ENCODE measurements at regions of chr9 and their contacts with region 1.

Region 1: DNA sequence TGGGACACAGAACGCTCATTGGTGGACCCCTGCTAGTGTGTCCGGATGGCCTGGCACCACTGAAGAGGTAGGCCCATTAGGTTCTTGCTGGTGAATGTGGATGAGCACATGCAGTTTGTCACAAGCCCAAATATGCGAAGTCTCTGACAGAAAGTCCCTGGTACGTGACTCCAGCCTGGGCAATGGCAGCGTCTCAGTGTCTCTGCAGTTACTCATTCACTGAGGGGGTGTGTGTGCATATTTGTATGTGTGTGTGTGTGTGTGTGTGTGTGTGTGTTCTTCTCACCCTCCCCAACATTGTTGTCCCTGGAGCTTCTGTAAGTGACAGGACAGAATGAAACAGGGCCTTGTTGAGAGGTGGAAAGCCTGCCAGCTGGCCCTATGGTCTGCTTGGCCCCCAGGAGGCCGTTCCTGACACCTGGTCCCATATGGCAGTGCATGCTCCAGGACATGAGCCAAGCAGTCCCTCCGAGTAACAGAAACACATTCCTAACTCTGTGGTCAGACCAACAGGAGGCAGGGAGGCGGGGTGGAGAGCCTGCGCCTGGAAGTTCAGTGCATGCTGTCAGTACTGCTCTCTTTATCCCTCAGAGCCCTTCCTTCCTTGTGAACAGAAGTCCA is 169.9 kb downstream of the SLC28A3 start:
- DNase-seq: peak; percentile 93
- ATAC-seq: peak; percentile 97

Region 2: DNA sequence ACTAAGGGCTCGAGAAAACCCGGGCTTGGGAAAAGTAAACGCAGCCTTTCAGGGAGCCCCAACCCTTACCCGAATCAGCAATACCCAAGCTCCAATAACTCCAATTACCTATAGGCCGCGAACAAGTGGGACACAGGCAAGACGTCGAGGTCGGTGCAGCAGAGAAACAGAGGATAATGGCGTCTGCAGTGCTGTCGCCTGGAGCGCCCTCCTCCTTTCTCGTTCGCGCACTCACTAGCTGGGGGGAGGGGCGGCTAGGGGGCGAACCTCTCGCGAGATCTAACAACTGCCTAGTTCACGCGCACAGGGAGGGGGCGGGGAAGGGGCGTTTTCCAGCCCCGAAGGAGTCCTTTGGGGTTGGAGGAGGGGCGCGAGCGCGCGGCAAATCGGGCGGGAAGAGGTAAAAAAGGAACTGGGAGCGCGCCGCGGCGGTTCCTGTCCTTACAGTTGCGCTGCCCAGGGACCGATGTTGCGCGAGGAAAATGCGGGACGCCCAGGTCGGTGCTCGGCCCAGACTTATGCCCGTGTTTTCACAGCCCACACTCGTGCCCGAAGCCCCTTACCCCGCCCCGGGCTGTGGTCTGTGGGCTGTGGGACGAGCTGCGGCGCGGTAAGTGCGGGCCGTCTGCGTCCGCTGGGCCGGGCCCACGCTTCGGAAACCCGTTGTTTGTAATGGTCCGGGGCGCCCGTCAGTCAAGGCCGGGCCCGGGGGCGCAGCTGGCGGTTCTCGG is 190.1 kb before region 1 on chr9 and contains the start of gene RMI1:
- intact Hi-C with region 1: loop called (anchors 5 kb)
- DNase-seq: peak; percentile 100
- ATAC-seq: peak; percentile 94
- total RNA-seq, gene RMI1: 7.6 TPM

Region 3: GRCh38 chr9:84054341-84055010 is 116.2 kb before region 1 on chr9:
- intact Hi-C with region 1: loop called (anchors 10 kb)
- DNase-seq: no peak
- ATAC-seq: no peak

Region 4: DNA sequence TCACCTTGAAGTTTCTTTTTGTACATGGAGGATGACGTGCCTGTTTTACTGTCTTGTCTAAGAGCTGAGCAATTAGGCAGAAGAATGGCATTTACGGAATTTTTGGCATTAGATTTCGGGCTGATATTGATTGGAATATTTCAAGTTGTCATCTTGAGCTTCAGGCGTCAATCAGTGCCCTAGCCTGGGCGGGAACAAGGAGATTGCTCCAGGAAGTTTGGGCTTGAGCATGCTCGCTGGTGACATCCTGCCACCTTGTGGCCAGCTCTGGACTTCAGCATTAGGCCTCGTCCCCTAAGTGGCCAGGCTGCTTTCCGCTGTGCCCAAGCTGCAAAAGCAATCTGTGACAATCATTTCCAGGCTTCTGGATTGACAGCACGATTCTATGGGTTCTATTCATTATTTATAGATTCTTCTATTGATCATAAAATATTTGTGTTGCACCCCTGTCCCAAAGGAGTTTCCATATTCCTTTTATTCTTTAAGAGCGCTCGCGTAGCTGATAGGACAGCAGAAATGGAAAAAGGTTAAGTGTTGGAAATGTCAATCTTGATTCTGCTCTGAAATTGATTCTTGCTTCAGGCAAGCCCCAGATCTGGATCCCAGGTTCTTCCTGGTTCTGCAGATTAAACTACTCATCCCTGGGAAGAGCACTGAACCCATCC is 90.6 kb after region 1 on chr9:
- intact Hi-C with region 1: loop called (anchors 10 kb)
- DNase-seq: peak; percentile 90
- ATAC-seq: peak; percentile 99

Region 5: GRCh38 chr9:84557751-84558150 is 387.1 kb after region 1 on chr9:
- intact Hi-C with region 1: no loop called
- DNase-seq: no peak
- ATAC-seq: no peak